ENCODE measurements at regions of chr11 and their contacts with region 1.

Region 1: GRCh38 chr11:47847892-47848635 is at the start of gene NUP160:
- DNase-seq: peak; percentile 78 to 92 (median 85)
- ATAC-seq: peak; percentile 92
- H3K4me3 ChIP-seq: peak within 1 kb of the TSS; percentile 88
- H3K4me3 Mint-ChIP-seq: peak within 1 kb of the TSS; percentile 88 to 100 (median 98)
- H3K27ac ChIP-seq: peak within 1 kb of the TSS; percentile 97
- H3K27ac Mint-ChIP-seq: peak within 1 kb of the TSS; percentile 72 to 100 (median 98)
- H3K4me1 ChIP-seq: peaks cover 12 to 66% of the 10 kb centered on the region in 2 donors
- H3K4me1 Mint-ChIP-seq: peaks cover 38 to 71% (median 62%) of the 10 kb centered on the region in 7 donors
- H3K27me3 ChIP-seq: no peaks in the 10 kb centered on the region
- H3K27me3 Mint-ChIP-seq: peaks cover 0 to 2% (median 0%) of the 10 kb centered on the region in 5 donors
- total RNA-seq, gene NUP160: 53.9 to 68.0 (median 65.5) TPM

Region 2: GRCh38 chr11:47373876-47374720 is 474.0 kb before region 1 on chr11:
- CTCF ChIA-PET with region 1: interaction called, 6 read pairs
- POLR2A ChIA-PET with region 1: interaction called, 3 read pairs
- intact Hi-C with region 1: loop called in 1 of 2 experiments (anchors 1 kb)
- DNase-seq: peak; percentile 69 to 91 (median 82)
- ATAC-seq: peak; percentile 84
- H3K4me3 ChIP-seq: no peak overlapping the region
- H3K4me3 Mint-ChIP-seq: peak overlapping the region in 1 of 10 donors; percentile 51
- H3K27ac ChIP-seq: no peak overlapping the region
- H3K27ac Mint-ChIP-seq: peak overlapping the region in 3 of 9 donors; percentile 48 to 72 (median 65)
- H3K4me1 ChIP-seq: peaks cover 0 to 3% of the 10 kb centered on the region in 2 donors
- H3K4me1 Mint-ChIP-seq: peaks cover 5 to 18% (median 9%) of the 10 kb centered on the region in 7 donors
- H3K27me3 ChIP-seq: no peaks in the 10 kb centered on the region
- H3K27me3 Mint-ChIP-seq: no peaks in the 10 kb centered on the region

Region 3: GRCh38 chr11:47642099-47642855 is 205.8 kb before region 1 on chr11 and contains the start of gene MTCH2:
- CTCF ChIA-PET with region 1: no interaction called
- POLR2A ChIA-PET with region 1: no interaction called
- intact Hi-C with region 1: loop called (anchors 1 kb)
- DNase-seq: peak; percentile 92 to 97 (median 95)
- ATAC-seq: peak; percentile 97
- H3K4me3 ChIP-seq: peak within 1 kb of the TSS; percentile 85
- H3K4me3 Mint-ChIP-seq: peak within 1 kb of the TSS; percentile 92 to 99 (median 96)
- H3K27ac ChIP-seq: peak within 1 kb of the TSS; percentile 83
- H3K27ac Mint-ChIP-seq: peak within 1 kb of the TSS; percentile 94 to 99 (median 97)
- H3K4me1 ChIP-seq: peaks cover 8 to 11% of the 10 kb centered on the region in 2 donors
- H3K4me1 Mint-ChIP-seq: peaks cover 17 to 32% (median 25%) of the 10 kb centered on the region in 7 donors
- H3K27me3 ChIP-seq: no peaks in the 10 kb centered on the region
- H3K27me3 Mint-ChIP-seq: no peaks in the 10 kb centered on the region
- total RNA-seq, gene MTCH2: 19.8 to 88.6 (median 21.1) TPM

Region 4: GRCh38 chr11:47766305-47767227 is 81.5 kb before region 1 on chr11:
- CTCF ChIA-PET with region 1: interaction called, 4 read pairs
- POLR2A ChIA-PET with region 1: interaction called, 15 read pairs
- intact Hi-C with region 1: loop called (anchors 1 kb)
- DNase-seq: peak; percentile 60 to 84 (median 79)
- ATAC-seq: peak; percentile 52
- H3K4me3 ChIP-seq: peak overlapping the region; percentile 94
- H3K4me3 Mint-ChIP-seq: peak overlapping the region; percentile 88 to 100 (median 96)
- H3K27ac ChIP-seq: peak overlapping the region; percentile 97
- H3K27ac Mint-ChIP-seq: peak overlapping the region; percentile 96 to 100 (median 99)
- H3K4me1 ChIP-seq: peaks cover 20 to 22% of the 10 kb centered on the region in 2 donors
- H3K4me1 Mint-ChIP-seq: peaks cover 16 to 39% (median 23%) of the 10 kb centered on the region in 7 donors
- H3K27me3 ChIP-seq: no peaks in the 10 kb centered on the region
- H3K27me3 Mint-ChIP-seq: no peaks in the 10 kb centered on the region

Region 5: DNA sequence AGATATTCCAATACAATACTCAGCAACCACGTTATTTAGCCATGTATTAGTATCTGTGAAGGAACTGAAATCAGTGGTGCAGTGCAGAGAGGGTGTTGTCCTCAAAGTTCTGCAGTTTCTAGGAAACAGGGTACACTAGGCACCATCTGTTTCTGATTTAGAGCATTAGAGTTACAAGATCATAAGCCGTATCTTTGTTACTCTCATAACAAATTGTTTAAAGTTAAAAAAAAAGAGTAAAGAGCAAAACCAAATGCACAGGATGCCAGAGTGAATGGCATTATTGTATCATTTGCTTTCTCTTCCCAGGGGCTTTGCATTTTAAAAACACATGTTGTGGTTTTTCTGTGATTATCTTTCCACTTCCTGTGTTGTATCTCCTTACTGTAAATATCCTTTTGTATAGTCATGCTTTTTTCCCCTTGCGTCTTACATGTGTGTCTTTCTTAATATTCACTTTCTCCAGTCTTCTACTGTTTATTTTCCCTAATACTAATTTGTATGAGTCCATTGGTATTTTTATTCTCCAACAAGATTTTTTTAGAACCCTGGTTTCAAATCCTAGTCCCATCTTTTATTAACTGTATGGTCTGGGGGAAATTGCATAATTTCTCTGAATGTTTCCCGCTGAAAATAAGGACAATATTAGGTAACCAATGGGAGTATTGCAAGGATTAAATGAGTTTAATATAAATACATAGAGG is 15.3 kb after region 1 on chr11:
- CTCF ChIA-PET with region 1: interaction called, 5 read pairs
- POLR2A ChIA-PET with region 1: interaction called, 8 read pairs
- intact Hi-C with region 1: loop called in 1 of 2 experiments (anchors 1 kb)
- DNase-seq: peak in 7 of 9 donors; percentile 34 to 84 (median 69)
- ATAC-seq: peak; percentile 76
- H3K4me3 ChIP-seq: no peak overlapping the region
- H3K4me3 Mint-ChIP-seq: peak overlapping the region; percentile 19 to 63 (median 54)
- H3K27ac ChIP-seq: peak overlapping the region; percentile 40
- H3K27ac Mint-ChIP-seq: peak overlapping the region; percentile 47 to 93 (median 70)
- H3K4me1 ChIP-seq: peaks cover 16 to 33% of the 10 kb centered on the region in 2 donors
- H3K4me1 Mint-ChIP-seq: peaks cover 13 to 49% (median 44%) of the 10 kb centered on the region in 7 donors
- H3K27me3 ChIP-seq: no peaks in the 10 kb centered on the region
- H3K27me3 Mint-ChIP-seq: no peaks in the 10 kb centered on the region

Region 6: DNA sequence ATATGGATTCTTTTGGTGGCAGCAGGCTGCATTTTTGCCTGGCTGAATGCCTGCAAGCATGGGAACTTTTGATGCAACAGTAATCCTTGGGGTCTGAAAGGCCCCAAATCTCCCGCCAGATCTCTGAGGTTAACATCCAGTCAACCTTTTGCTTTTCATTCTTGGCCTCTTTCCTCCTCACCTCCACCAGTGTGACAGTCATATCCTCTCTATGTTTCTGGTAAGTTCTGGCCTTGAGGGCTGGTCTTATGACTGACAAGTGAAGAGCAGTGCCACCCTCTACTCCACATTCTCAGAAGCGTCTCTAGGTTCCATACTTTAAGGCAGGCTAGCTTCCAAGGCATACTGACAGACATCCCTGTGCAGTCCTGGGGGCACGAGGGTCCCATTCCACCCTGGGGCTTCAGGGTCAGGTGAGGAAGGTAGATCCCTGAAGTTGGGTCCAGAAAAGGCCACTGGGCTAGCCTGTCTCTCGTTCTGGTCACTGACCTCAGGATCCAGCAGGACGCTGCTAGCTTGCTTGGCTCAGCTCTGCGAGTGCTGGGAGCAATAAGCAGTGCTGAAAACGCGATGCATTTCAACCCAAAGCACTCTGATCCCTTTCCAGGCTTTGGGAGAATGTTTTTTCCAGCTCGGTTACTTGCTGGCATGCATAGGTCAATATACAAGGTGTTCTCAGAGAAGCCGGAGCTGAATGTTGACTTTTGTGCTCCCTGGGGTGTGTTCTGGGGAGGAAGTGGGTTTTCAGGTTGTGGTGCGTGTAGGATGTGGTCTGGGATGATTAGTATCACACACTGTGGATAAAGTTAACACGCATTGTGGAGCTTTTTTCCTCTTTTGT is 207.4 kb after region 1 on chr11:
- CTCF ChIA-PET with region 1: interaction called, 3 read pairs
- POLR2A ChIA-PET with region 1: interaction called, 4 read pairs
- intact Hi-C with region 1: loop called in 1 of 2 experiments (anchors 5 kb)
- DNase-seq: peak in 8 of 9 donors; percentile 69 to 91 (median 88)
- ATAC-seq: peak; percentile 91
- H3K4me3 ChIP-seq: peak overlapping the region; percentile 58
- H3K4me3 Mint-ChIP-seq: peak overlapping the region; percentile 74 to 88 (median 78)
- H3K27ac ChIP-seq: peak overlapping the region; percentile 34
- H3K27ac Mint-ChIP-seq: peak overlapping the region; percentile 41 to 98 (median 92)
- H3K4me1 ChIP-seq: peaks cover 67 to 84% of the 10 kb centered on the region in 2 donors
- H3K4me1 Mint-ChIP-seq: peaks cover 70 to 91% (median 87%) of the 10 kb centered on the region in 7 donors
- H3K27me3 ChIP-seq: no peaks in the 10 kb centered on the region
- H3K27me3 Mint-ChIP-seq: peaks cover 0 to 2% (median 0%) of the 10 kb centered on the region in 5 donors